MCF 10A (cell line): ENCODE measurements at regions of chr1 and their contacts with region 1.

Region 1: DNA sequence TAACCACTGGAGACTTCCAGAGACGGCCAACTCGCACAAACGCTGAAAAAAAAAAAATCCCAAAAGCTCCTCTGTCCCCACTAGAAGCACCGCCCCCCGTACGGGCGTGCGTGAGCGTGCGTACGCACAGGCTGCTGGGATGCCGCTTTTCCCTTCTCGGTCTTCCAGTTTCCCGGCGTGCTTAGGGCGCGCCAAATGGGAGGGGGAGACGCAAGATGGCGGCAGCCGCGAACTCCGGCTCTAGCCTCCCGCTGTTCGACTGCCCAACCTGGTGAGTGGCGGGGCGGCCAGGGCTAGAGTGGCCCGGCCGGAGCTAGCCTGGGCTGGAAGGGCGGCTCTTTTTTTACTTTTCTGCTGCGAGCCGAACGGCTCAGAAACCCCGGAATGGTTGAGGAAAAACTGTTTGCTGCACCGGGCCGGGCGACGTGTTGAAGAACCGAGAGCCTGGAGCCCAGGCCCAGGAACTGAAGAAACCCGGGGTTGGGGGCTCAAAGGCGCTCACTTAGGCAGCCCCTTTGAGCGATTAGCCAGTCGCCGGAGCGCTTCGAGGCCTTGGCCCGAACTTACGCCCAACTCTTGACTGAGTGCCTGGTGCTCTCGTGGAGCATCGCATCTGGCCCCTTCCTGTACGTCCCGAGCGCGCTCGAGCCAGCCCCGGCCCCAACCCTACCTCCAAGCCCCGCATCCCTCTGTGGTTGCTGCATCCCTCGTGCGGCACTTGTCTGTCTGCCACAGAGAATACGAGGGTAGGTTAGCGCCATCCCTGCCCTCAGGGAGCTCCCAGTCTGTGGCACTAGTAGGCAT is at the start of gene PPP1R8:
- DNase-seq: peak; percentile 97
- H3K4me3 Mint-ChIP-seq: peak within 1 kb of the TSS; percentile 90
- H3K27ac Mint-ChIP-seq: peak within 1 kb of the TSS; percentile 95
- H3K4me1 Mint-ChIP-seq: peaks cover 15% of the 10 kb centered on the region
- H3K27me3 Mint-ChIP-seq: no peaks in the 10 kb centered on the region
- CTCF ChIP-seq: no peak
- total RNA-seq, gene PPP1R8: 48.6 and 51.1 TPM in 2 replicates

Region 2: DNA sequence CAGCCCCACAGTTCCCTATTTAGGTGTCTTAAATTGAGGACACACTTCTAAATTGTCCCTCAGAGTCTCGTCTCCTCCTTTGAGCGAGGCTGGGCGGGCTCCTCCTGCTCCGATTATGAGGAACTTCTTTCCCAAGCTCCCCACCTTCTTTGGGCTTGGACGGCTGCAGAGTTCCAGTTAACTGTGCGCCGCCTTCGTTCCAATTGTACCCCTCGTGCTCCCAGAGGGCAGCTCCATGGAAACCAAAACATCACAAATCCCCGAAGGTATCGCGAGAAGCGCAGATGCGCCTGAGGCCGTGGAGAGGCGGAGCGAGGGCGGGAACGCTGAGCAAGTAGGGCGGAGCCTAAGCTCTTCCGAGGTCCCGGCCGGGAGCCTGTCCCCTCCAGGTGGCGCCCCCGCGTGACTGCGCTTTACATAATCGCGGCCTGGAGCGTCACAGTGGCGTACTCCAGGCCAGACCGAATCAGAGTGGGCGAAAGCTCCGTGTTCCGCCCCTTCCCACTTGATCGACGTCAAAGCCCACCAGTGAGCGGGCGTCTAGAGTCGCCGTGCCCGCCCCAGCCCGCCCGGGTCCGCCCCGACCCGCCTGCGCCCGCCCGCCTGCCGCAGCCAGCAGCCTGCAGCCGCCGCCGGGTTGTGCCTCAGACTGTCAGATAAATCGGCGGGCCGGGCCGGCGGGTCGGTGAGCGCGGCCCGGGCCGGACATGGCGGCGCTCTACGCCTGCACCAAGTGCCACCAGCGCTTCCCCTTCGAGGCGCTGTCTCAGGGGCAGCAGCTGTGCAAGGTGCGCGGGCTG is 105.2 kb before region 1 on chr1 and contains the start of gene FAM76A:
- CTCF ChIA-PET with region 1: interaction called, 3 read pairs
- POLR2A ChIA-PET with region 1: interaction called, 31 read pairs
- intact Hi-C with region 1: loop called (anchors 10 kb)
- DNase-seq: peak; percentile 98
- H3K4me3 Mint-ChIP-seq: peak within 1 kb of the TSS; percentile 88
- H3K27ac Mint-ChIP-seq: peak within 1 kb of the TSS; percentile 100
- H3K4me1 Mint-ChIP-seq: peaks cover 11% of the 10 kb centered on the region
- H3K27me3 Mint-ChIP-seq: peaks cover 3% of the 10 kb centered on the region
- CTCF ChIP-seq: peak; percentile 23
- total RNA-seq, gene FAM76A: 9.7 and 9.9 TPM in 2 replicates

Region 3: DNA sequence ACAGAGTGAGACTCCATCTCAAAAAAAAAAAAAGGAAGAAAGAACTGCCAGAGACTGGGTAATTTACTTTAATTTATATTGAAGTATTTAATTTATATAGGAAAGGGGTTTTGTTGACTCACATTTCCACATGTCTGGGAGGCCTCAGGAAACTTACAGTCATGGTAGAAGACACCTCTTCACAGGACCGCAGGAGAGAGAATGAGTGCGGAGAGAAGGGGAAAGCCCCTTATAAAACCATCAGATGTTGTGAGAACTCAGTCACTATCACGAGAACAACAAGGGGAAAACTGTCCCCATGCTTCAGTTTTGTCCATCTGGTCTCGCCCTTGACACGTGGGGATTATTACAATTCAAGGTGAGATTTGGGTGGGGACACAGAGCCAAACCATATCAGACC is 26.0 kb before region 1 on chr1:
- CTCF ChIA-PET with region 1: no interaction called
- POLR2A ChIA-PET with region 1: interaction called, 12 read pairs
- intact Hi-C with region 1: no loop called
- DNase-seq: no peak
- H3K4me3 Mint-ChIP-seq: no peak overlapping the region
- H3K27ac Mint-ChIP-seq: no peak overlapping the region
- H3K4me1 Mint-ChIP-seq: no peaks in the 10 kb centered on the region
- H3K27me3 Mint-ChIP-seq: no peaks in the 10 kb centered on the region
- CTCF ChIP-seq: no peak

Region 4: DNA sequence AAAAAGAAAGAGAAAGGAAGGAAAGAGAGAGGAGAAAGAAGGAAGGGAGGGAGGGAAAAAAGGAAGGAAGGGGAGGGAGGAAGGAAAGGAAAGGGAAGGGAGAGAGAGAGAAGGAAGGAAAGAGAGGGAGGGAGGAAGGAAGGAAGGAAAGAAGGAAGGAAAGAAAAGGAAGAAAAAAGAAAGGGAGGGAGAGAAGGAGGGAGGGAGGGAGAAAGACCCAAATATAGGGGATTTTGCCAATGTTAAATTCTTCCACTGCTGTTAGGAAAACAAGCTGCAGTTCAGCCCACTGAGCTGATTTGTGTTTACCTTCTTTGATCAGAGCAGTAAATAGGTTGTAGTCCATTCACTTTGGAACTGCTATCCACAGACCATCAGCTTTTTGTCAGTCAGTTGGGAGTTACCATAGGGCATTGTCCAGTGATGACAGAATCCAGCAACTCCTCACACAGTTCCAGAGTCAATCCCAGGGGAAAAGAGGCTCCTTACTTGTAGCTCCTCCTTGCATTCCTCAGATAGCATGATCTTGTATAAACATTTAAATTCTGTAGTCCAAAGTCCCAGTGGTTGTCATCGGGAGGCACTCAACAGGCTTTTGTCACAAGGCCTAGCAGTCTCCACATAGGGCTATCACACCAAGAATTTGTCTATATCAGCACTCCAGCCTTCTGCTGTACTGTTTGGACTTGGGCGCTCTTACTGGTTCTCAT is 13.7 kb before region 1 on chr1:
- CTCF ChIA-PET with region 1: no interaction called
- POLR2A ChIA-PET with region 1: interaction called, 10 read pairs
- intact Hi-C with region 1: no loop called
- DNase-seq: no peak
- H3K4me3 Mint-ChIP-seq: no peak overlapping the region
- H3K27ac Mint-ChIP-seq: no peak overlapping the region
- H3K4me1 Mint-ChIP-seq: no peaks in the 10 kb centered on the region
- H3K27me3 Mint-ChIP-seq: no peaks in the 10 kb centered on the region
- CTCF ChIP-seq: no peak

Region 5: DNA sequence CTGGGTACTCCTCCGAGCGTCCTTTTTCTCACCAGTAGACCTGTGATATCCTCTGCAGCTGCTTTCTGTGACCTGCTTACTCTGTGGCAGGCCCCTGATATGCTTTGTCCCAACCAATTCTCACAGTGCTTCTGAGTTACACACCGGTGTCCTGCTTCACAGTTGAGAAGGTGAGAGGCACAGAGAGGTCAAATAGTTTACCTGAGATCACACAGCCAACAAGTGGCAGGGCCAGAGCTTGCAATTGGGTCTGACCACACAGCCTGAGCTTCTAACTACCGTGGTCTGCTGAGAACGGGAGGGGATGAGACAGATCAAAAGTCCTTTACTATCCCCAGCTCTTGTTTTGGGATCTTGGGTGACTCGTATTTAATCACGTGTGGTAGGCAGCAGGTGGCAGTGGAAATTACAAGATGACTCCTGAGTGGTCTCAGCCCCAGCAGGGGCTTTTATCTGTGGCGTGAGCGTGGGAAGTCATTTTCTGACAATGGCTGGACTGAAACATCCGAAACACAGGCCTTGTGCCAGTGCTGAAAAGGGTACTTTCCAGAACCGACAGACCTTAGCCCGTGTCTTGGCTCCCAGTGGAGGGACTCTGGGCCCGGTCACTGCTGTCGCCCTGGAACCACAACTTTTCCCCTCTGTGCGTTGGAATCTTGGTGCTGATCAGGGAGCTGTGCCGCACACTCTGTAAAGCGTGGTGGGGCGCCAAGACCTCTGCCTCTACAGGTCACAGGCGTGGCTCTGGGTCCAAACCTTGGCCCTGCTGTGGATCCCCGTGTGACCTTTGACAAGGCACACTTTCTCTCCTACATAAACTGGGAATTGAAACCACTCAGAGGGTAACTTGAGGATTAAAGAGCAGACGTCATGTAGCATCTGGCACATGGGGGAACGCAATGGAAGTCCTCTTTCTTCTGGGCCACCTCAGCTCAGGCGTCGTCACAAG is 53.5 kb after region 1 on chr1:
- CTCF ChIA-PET with region 1: no interaction called
- POLR2A ChIA-PET with region 1: no interaction called
- intact Hi-C with region 1: no loop called
- DNase-seq: no peak
- H3K4me3 Mint-ChIP-seq: no peak overlapping the region
- H3K27ac Mint-ChIP-seq: no peak overlapping the region
- H3K4me1 Mint-ChIP-seq: no peaks in the 10 kb centered on the region
- H3K27me3 Mint-ChIP-seq: no peaks in the 10 kb centered on the region
- CTCF ChIP-seq: no peak